Left cardiac atrium (tissue), 4 donors: ENCODE measurements at regions of chr9 and their contacts with region 1.

Region 1: DNA sequence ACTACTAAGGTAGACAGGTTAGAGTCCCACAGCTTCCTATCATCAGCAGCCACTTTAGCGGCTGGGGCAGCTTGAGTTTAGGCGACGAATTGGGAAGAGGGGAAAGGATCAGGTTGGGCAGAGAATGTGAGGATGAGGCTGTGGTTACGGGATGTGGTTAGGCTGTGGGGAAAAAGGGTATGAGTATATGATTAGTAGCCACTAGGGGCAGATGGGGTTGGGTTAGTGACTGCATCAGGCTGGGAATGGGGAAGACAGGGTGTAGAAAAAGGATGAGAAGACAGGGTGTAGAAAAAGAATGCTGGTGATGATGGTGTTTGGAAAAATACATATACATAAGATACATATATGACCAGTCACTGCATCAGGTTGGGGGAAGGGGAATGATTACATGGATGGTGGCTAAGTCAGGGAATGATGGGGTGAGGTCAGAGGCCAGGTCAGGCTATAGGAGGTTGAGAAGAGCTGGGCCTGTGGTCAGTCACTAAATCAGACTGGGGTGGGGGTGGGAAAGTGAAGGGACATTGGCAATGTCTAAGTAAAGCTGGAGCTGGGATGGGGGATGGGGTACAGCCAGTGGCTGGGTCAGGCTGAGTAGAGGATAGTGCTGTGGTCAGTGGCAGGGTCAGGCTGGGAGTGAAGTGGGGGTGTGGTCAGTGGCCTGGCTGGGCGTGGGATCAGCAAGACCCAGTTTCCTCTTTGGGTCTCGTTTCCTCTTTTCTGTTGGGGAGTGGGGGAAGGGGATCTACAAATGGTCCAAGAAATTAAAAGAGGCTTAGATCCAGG is 2.1 kb downstream of the TLN1 start:
- DNase-seq: peak; percentile 72
- ATAC-seq: peak in 1 of 2 donors; percentile 4

Region 2: DNA sequence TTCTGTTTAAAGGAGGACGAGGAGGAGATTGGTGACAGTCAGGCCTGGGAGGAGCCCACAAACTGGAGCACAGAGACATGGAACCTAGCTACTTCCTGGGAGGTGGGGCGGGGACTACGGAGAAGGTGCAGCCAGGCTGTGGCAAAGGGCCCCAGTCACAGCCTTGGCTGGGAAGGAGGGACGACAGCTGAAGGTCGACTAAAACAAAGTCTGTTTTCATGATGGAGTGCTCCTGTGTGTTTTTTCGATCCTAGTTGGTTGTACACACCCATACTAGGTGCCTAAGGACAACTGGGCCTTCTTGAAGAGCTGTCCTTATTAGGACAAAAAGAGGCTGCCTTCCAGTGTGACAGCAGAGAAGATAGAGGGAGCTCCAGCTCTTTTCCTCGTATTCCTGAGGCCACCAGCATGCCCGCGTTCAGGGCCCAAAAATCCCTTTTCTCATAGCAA is 68.9 kb before region 1 on chr9:
- intact Hi-C with region 1: loop called in 1 of 2 experiments (anchors 2 kb)
- DNase-seq: no peak
- ATAC-seq: no peak

Region 3: DNA sequence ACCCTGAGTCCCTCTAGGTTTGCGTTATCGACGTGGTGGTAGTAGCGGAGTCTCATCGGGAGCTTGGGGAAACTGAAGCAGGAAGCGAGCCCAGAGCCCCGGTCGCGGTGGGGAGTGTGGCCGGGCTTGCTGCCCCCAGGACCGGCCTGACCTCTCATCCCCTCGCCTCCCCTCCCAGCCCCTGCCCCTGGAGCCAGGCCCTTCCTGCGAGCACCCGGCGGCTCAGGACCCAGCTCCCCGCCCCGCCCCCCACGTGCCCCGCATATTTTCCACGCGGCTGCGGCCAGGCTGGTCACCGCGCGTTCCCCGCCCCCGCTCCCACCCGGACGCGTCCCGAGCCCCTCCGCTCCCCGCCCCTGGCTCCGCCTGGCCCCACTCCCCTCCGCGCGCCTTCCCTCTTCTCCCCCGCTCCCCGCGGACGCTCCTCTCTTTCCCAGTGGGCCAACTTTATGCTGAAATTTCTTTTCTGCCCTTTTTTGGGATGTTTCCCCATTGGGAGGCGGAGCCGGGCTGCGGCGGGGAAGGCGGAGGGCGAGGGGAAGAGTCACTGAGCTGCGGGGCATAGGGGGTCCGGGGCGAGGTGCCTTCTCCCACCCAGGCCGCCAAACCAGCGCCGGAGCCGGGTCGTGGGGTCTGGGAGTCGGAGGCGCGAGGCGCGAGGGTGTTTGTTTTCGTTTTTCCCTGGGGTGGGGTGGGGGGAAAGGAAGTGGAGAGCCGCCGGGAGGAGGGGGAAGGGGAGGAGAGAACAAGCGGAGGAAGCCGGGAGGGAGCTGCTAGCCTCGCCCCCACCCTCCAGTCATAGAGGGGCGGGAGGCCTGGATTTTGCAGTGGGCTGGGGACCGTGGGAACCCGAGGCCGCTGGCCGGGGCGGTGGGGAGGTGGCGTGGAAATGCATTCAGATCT is 39.2 kb before region 1 on chr9:
- intact Hi-C with region 1: loop called in 1 of 2 experiments (anchors 5 kb)
- DNase-seq: peak; percentile 85
- ATAC-seq: peak; percentile 69 to 71